CD4-positive, alpha-beta T cell (primary cell): ENCODE measurements at regions of chr1 and their contacts with region 1.

Region 1: GRCh38 chr1:174968750-174969244 is 30.9 kb upstream of the CACYBP start:
- DNase-seq: peak in 9 of 14 experiments; percentile 7 to 90 (median 28)
- ATAC-seq: peak; percentile 43
- H3K4me3 ChIP-seq: peak overlapping the region; percentile 26
- H3K4me3 Mint-ChIP-seq: peak overlapping the region; percentile 59
- H3K27ac ChIP-seq: peak overlapping the region; percentile 76 to 88
- H3K27ac Mint-ChIP-seq: peak overlapping the region; percentile 95
- H3K4me1 ChIP-seq: peaks cover 50% of the 10 kb centered on the region
- H3K4me1 Mint-ChIP-seq: peaks cover 71% of the 10 kb centered on the region
- H3K27me3 ChIP-seq: no peaks in the 10 kb centered on the region
- H3K27me3 Mint-ChIP-seq: no peaks in the 10 kb centered on the region
- CTCF ChIP-seq: no peak

Region 2: GRCh38 chr1:173318788-173319187 is 1650.0 kb before region 1 on chr1:
- CTCF ChIA-PET with region 1: no interaction called
- POLR2A ChIA-PET with region 1: no interaction called
- intact Hi-C with region 1: no loop called
- DNase-seq: no peak
- ATAC-seq: no peak
- H3K4me3 ChIP-seq: no peak overlapping the region
- H3K4me3 Mint-ChIP-seq: no peak overlapping the region
- H3K27ac ChIP-seq: no peak overlapping the region
- H3K27ac Mint-ChIP-seq: no peak overlapping the region
- H3K4me1 ChIP-seq: no peaks in the 10 kb centered on the region
- H3K4me1 Mint-ChIP-seq: peaks cover 8% of the 10 kb centered on the region
- H3K27me3 ChIP-seq: no peaks in the 10 kb centered on the region
- H3K27me3 Mint-ChIP-seq: no peaks in the 10 kb centered on the region
- CTCF ChIP-seq: no peak

Region 3: GRCh38 chr1:173853074-173853473 is 1115.7 kb before region 1 on chr1:
- CTCF ChIA-PET with region 1: no interaction called
- POLR2A ChIA-PET with region 1: no interaction called
- intact Hi-C with region 1: no loop called
- DNase-seq: no peak
- ATAC-seq: no peak
- H3K4me3 ChIP-seq: no peak overlapping the region
- H3K4me3 Mint-ChIP-seq: no peak overlapping the region
- H3K27ac ChIP-seq: no peak overlapping the region
- H3K27ac Mint-ChIP-seq: no peak overlapping the region
- H3K4me1 ChIP-seq: no peaks in the 10 kb centered on the region
- H3K4me1 Mint-ChIP-seq: no peaks in the 10 kb centered on the region
- H3K27me3 ChIP-seq: no peaks in the 10 kb centered on the region
- H3K27me3 Mint-ChIP-seq: no peaks in the 10 kb centered on the region
- CTCF ChIP-seq: no peak

Region 4: GRCh38 chr1:174800216-174800851 is 168.5 kb before region 1 on chr1:
- CTCF ChIA-PET with region 1: interaction called, 7 read pairs
- POLR2A ChIA-PET with region 1: interaction called, 24 read pairs
- intact Hi-C with region 1: loop called in 1 of 2 experiments (anchors 5 kb)
- DNase-seq: peak in 9 of 14 experiments; percentile 4 to 48 (median 10)
- ATAC-seq: no peak
- H3K4me3 ChIP-seq: peak overlapping the region; percentile 79
- H3K4me3 Mint-ChIP-seq: no peak overlapping the region
- H3K27ac ChIP-seq: peak overlapping the region; percentile 34 to 57
- H3K27ac Mint-ChIP-seq: no peak overlapping the region
- H3K4me1 ChIP-seq: peaks cover 12% of the 10 kb centered on the region
- H3K4me1 Mint-ChIP-seq: no peaks in the 10 kb centered on the region
- H3K27me3 ChIP-seq: no peaks in the 10 kb centered on the region
- H3K27me3 Mint-ChIP-seq: no peaks in the 10 kb centered on the region
- CTCF ChIP-seq: no peak

Region 5: GRCh38 chr1:174912264-174912663 is 56.5 kb before region 1 on chr1:
- CTCF ChIA-PET with region 1: no interaction called
- POLR2A ChIA-PET with region 1: interaction called, 4 read pairs
- intact Hi-C with region 1: loop called in 1 of 2 experiments (anchors 5 kb)
- DNase-seq: no peak
- ATAC-seq: no peak
- H3K4me3 ChIP-seq: no peak overlapping the region
- H3K4me3 Mint-ChIP-seq: no peak overlapping the region
- H3K27ac ChIP-seq: no peak overlapping the region
- H3K27ac Mint-ChIP-seq: no peak overlapping the region
- H3K4me1 ChIP-seq: peaks cover 4% of the 10 kb centered on the region
- H3K4me1 Mint-ChIP-seq: peaks cover 52% of the 10 kb centered on the region
- H3K27me3 ChIP-seq: no peaks in the 10 kb centered on the region
- H3K27me3 Mint-ChIP-seq: no peaks in the 10 kb centered on the region
- CTCF ChIP-seq: no peak

Region 6: DNA sequence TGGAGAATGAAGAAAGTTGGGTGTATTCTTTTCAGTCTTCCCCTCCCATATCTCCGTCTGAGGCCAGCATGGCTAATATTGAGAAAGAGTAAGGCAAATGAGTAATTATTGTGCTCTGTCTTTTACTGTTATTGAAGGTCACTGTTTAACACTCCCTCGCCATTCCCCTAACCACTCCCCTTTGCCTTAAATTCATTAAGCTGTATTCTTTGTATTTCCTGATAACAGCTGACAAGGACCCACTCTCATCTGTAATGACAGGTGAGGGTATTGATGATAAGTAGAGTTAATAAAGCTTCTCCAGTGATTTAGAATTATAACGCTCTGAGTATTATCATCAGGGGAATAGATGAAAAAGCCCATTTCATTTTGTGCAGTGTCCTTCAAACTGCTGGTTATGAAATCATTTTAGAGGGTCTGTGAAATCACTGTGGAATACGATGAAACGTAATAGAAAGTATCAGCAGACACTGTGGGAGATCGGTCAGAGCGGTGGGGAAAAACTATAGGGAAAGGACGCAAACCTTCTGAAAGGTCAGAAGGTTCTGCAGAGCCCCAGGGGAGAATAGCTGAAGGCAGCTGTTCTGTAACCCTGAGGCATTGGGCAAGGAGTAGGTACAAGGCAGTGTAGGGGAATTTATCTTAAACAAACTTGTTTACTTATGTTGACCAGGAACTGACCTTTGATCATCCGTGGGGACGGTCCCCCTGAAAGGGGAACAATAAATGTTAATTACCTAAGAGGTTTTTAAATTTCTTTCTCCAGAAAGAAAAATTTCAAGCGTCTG is 15.3 kb before region 1 on chr1:
- CTCF ChIA-PET with region 1: no interaction called
- POLR2A ChIA-PET with region 1: interaction called, 18 read pairs
- intact Hi-C with region 1: no loop called
- DNase-seq: no peak
- ATAC-seq: no peak
- H3K4me3 ChIP-seq: no peak overlapping the region
- H3K4me3 Mint-ChIP-seq: no peak overlapping the region
- H3K27ac ChIP-seq: no peak overlapping the region
- H3K27ac Mint-ChIP-seq: peak overlapping the region; percentile 61
- H3K4me1 ChIP-seq: peaks cover 6% of the 10 kb centered on the region
- H3K4me1 Mint-ChIP-seq: peaks cover 40% of the 10 kb centered on the region
- H3K27me3 ChIP-seq: no peaks in the 10 kb centered on the region
- H3K27me3 Mint-ChIP-seq: no peaks in the 10 kb centered on the region
- CTCF ChIP-seq: no peak

Region 7: DNA sequence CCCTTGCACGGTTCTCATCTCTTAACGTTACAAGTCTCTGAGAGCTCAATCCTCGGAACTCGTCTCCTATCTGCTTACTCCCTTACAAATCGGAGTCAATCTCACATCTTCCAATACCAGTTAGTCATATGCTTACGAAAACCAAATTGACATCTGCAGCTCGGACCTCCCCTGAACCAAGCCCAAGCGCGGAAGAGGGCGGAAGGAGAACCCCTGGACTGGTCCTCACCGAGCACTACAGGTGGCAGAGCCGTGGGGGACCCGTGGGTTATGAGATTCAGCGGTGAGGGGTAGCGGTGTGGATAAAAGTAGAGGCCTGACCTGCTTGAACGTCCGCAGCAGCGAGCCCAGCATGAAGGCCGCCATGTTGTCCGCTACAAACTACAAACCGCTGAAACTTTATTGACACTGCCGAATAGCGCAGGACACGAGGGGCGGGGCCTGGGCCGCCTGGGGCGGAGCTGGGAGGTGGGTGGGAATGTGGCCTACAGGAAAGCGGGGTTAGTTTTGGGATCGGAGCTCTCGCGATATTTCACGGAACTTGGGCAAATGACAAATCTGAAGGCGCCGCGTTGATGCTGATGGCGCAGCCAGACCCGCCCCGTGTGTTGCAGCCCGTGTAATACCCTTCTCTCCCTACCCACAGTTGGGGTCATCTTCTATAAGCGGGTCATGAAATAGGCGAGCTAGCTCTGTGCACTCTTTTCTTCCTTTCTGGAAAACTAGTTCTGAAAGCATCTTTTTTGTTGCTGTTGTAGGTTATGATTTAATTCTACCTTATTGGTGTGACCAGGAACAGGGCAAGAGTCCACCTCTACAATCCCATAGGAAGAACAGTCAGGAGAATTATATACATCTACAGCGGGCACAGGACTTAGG is 54.5 kb after region 1 on chr1 and contains the start of gene MRPS14:
- CTCF ChIA-PET with region 1: no interaction called
- POLR2A ChIA-PET with region 1: interaction called, 22 read pairs
- intact Hi-C with region 1: no loop called
- DNase-seq: peak; percentile 96 to 99 (median 98)
- ATAC-seq: peak; percentile 90
- H3K4me3 ChIP-seq: peak within 1 kb of the TSS; percentile 97
- H3K4me3 Mint-ChIP-seq: peak within 1 kb of the TSS; percentile 88
- H3K27ac ChIP-seq: peak within 1 kb of the TSS; percentile 84 to 91
- H3K27ac Mint-ChIP-seq: peak within 1 kb of the TSS; percentile 94
- H3K4me1 ChIP-seq: peaks cover 19% of the 10 kb centered on the region
- H3K4me1 Mint-ChIP-seq: peaks cover 34% of the 10 kb centered on the region
- H3K27me3 ChIP-seq: no peaks in the 10 kb centered on the region
- H3K27me3 Mint-ChIP-seq: no peaks in the 10 kb centered on the region
- CTCF ChIP-seq: no peak
- total RNA-seq, gene MRPS14: 8.5 to 9.6 TPM